Colonic mucosa (tissue), 4 donors: ENCODE measurements at regions of chr9 and their contacts with region 1.

Region 1: DNA sequence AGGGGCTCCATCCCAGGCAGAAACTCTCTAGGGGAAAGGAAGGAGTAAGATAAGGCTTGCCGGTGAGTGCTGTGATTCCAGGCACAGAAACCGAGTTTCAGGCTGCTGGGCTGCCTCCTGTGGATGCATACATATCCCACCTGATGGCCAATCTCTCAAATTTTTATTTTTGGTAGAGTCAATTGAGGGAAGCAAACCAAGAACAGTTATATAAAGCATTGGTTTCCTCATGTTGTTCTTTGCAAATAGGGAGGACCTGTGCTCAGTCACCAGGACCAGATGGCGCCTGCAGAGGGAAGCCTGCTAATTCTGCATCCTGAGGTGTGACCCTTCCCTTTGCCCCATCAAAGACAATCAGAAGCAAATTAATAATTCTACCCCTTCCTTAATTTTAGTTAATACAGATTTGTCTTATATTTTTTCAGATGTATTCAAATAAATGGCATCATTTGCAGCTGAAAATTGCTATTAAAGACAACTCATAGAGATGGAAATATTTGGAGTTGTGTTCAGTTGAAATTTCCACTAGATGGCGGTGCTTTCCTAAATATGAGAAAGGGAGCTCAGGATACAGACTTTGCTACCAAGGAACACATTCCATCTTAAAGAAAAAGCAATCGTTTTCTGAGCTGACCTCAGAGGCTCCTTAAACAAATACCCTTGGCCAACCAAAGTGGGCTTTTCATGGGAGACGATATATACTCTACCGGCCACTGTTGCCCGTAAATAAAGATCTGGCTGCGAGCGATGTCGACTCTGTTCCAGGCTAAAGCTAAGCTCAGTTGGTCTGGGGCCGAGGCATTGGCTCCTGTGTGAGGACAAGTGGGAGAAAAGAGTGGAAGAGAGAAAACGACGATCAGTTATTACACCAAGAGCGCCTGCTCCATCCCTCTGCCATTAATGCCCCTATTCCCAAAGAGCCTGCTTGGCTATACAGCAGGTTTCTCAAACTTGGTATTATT is 225.7 kb upstream of the KLF9 start:
- DNase-seq: no peak
- H3K4me3 ChIP-seq: no peak overlapping the region
- H3K27ac ChIP-seq: no peak overlapping the region
- H3K4me1 ChIP-seq: no peaks in the 10 kb centered on the region
- H3K27me3 ChIP-seq: no peaks in the 10 kb centered on the region
- CTCF ChIP-seq: peak; percentile 41

Region 2: DNA sequence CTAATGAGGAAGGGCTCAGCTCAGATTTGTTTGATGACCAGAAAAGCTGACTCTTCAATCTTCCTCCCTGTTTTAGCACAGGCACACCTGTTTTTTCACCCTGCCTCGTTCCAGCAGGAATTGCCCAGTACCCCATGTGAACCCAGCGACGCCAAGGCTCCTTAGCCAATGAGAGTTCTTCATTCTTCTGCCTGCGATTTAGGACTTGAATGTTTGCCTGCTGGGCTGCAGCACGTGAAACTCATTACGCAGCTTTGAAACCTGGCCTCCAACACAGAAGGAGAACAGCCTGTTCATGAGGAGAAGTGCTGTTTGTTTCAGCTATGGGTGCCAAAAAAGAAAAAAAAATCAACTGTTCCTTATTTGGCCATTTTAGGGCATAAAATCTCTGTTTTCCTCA is 165.8 kb after region 1 on chr9:
- intact Hi-C with region 1: no loop called
- DNase-seq: no peak
- H3K4me3 ChIP-seq: no peak overlapping the region
- H3K27ac ChIP-seq: no peak overlapping the region
- H3K4me1 ChIP-seq: no peaks in the 10 kb centered on the region
- H3K27me3 ChIP-seq: no peaks in the 10 kb centered on the region
- CTCF ChIP-seq: no peak

Region 3: DNA sequence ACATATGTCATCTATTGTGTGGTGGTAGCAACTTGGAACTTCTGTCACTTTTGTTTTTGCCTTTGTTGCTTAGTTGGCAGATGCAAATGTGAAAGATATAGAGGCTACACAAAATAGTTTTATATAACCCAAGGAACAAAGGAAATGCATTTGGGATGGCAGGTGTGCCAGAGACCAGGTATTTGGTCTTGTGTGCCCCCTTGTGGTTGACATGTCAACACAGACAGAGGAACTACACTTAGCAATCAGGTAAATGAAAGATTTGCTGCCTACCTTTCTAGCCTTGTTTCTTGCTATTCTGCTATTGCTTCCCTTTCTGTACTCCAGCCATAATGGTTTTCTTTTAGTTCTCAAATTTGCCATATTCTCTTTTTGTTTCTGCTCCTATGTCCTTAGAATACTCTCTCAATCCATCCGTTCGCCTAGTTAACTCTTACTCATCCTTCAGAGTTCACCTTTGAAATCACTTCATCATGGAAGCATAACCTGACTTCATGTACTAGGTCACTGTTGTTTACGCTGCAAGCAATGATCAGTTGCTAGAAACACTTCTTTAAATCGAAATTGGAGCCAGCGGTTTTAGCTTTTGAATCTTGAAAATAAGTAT is 361.7 kb after region 1 on chr9:
- intact Hi-C with region 1: loop called (anchors 5 kb)
- DNase-seq: peak; percentile 40
- H3K4me3 ChIP-seq: no peak overlapping the region
- H3K27ac ChIP-seq: no peak overlapping the region
- H3K4me1 ChIP-seq: no peaks in the 10 kb centered on the region
- H3K27me3 ChIP-seq: no peaks in the 10 kb centered on the region
- CTCF ChIP-seq: peak; percentile 42

Region 4: DNA sequence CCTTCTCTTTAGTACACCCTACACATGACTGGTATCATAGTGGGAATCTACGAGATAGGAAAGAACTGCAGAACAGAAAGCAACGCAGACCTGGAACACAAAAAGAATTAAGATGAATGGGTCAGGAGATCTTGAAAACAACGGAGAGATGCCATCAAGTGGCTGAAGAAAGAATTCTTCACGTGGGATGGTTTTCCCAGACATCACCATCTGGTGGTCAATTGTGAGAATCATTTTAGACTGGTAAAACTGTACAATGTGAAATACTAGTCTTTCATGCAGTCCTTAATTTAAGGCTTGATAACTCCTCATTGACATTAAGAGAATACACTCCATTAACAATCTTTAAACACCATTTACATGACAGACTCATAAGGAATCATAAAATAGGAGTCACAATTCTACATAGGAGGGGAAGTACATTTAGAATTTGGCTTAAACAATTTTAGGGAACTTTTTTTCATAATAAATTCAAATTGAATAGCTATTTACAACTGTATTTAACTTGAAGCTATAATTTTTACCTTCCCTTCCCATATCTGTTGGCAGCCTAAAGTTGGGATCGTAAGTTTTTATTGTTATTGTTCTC is 609.7 kb after region 1 on chr9:
- intact Hi-C with region 1: loop called (anchors 5 kb)
- DNase-seq: peak; percentile 19
- H3K4me3 ChIP-seq: no peak overlapping the region
- H3K27ac ChIP-seq: no peak overlapping the region
- H3K4me1 ChIP-seq: no peaks in the 10 kb centered on the region
- H3K27me3 ChIP-seq: no peaks in the 10 kb centered on the region
- CTCF ChIP-seq: peak; percentile 63